B cell (primary cell): ENCODE measurements at regions of chr4 and their contacts with region 1.

Region 1: DNA sequence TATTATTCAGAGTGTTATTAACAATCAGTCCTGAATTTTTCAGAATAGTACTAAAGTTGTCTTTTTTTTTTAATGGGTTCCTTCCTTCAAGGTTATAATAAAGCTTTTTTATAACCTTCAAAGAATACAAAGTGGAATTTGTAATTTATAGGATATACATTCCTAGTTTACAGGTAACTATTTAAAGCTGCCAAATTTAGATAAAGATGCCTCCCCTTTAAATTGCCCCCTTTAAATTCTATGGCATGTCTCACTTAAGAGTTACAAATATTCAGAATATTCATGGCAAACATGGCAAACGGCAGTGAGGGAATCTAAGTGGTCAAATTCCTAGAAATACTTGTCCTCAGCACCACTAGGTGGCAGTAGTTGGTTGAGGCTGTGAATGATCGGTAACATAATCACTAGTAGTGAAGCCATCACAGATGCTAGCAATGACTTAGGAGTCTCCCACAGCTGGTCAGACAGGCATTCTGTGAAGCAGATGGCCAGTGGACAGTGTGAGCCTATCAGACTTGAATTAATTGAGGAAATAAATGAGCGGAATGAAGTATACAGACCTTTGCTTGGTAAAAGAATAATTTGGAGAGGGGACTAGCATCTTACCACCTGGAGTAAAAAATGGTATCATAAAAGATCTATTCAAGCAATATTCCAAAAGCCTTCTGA is 86.4 kb downstream of the CBR4 start:
- DNase-seq: peak; percentile 71
- ATAC-seq: peak; percentile 51
- H3K4me3 ChIP-seq: no peak overlapping the region
- H3K4me3 Mint-ChIP-seq: no peak overlapping the region
- H3K27ac ChIP-seq: no peak overlapping the region
- H3K27ac Mint-ChIP-seq: no peak overlapping the region
- H3K4me1 ChIP-seq: no peaks in the 10 kb centered on the region
- H3K4me1 Mint-ChIP-seq: no peaks in the 10 kb centered on the region
- H3K27me3 ChIP-seq: no peaks in the 10 kb centered on the region
- H3K27me3 Mint-ChIP-seq: no peaks in the 10 kb centered on the region
- CTCF ChIP-seq: peak; percentile 90

Region 2: GRCh38 chr4:168183717-168184608 is 739.7 kb before region 1 on chr4:
- CTCF ChIA-PET with region 1: interaction called, 4 read pairs
- POLR2A ChIA-PET with region 1: no interaction called
- intact Hi-C with region 1: loop called (anchors 5 kb)
- DNase-seq: peak; percentile 12
- ATAC-seq: no peak
- H3K4me3 ChIP-seq: no peak overlapping the region
- H3K4me3 Mint-ChIP-seq: no peak overlapping the region
- H3K27ac ChIP-seq: no peak overlapping the region
- H3K27ac Mint-ChIP-seq: no peak overlapping the region
- H3K4me1 ChIP-seq: peaks cover 0 to 3% of the 10 kb centered on the region in 2 donors
- H3K4me1 Mint-ChIP-seq: peaks cover 6% of the 10 kb centered on the region
- H3K27me3 ChIP-seq: no peaks in the 10 kb centered on the region
- H3K27me3 Mint-ChIP-seq: no peaks in the 10 kb centered on the region
- CTCF ChIP-seq: peak; percentile 52

Region 3: DNA sequence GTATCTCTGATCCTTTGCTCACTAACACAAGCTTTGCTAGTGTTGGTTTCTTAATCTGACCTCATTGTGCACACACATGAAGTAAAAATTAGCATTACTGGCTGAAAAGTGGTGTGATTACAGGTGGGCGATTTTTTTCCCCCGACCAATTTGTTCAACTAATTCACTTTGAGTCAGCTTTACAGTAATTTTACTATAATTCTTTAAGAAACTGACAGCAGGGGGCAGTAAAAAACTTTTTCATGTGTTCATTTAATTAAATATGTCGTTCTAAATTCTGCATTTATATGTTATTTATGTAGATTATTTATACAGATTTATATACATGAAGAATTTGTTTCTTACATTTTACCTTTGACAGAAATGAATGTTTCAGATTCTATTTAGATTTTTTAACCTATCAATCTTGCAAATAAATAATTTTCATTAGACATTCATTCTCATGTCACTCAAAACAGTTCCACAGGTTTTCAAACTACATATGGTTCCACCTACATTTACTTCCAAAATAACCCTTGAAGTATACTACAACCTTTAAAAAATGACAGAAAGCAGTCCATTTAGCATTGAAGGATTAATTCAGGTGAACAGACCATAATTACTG is 409.3 kb before region 1 on chr4:
- CTCF ChIA-PET with region 1: interaction called, 6 read pairs
- POLR2A ChIA-PET with region 1: no interaction called
- intact Hi-C with region 1: loop called (anchors 10 kb)
- DNase-seq: peak; percentile 34
- ATAC-seq: no peak
- H3K4me3 ChIP-seq: no peak overlapping the region
- H3K4me3 Mint-ChIP-seq: no peak overlapping the region
- H3K27ac ChIP-seq: no peak overlapping the region
- H3K27ac Mint-ChIP-seq: no peak overlapping the region
- H3K4me1 ChIP-seq: no peaks in the 10 kb centered on the region
- H3K4me1 Mint-ChIP-seq: peaks cover 2% of the 10 kb centered on the region
- H3K27me3 ChIP-seq: no peaks in the 10 kb centered on the region
- H3K27me3 Mint-ChIP-seq: peaks cover 3% of the 10 kb centered on the region
- CTCF ChIP-seq: peak; percentile 73

Region 4: DNA sequence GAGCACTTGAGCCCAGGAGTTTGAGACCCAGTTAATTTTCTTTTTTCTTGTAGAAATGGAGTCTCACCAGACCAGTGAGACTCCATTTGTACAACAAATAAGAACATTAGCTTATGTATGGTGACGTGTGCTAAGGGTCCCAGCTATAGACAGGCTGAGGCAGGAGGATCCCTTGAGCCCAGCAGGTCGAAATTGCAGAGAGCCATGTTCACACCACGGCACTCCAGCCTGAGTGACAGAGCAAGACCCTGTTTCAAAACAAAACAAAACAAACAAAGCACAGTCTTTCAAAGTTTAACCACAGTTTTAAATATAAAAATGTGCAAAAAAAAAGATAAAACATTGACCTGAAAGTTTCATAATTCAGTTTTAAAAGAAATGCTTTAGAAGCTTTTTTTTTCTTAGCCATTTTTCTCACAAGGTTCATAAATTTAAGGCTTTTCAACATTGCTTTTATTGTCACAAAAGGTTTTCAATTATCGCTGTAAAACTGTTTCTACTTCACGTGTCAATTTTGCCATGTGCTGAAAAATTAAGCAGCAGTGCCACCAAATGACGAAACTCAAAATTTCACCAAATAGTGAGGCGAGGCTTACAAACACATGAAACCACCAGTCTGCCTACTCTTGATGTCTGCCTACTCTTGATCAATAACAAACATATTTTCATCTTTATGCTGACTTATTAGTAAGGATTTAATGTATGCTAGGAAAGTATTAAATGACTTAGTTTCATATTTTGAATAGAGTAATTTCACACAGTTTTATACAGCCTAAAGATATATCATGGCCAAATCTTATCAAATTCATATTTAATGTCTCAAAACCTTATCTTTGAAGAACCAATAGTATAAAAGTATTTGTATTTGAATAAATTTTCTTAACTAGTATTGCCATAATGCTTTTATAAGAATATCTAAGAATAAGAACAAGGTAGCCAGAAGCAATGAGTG is 562.4 kb after region 1 on chr4:
- CTCF ChIA-PET with region 1: interaction called, 102 read pairs
- POLR2A ChIA-PET with region 1: no interaction called
- intact Hi-C with region 1: loop called (anchors 1 kb)
- DNase-seq: peak; percentile 57
- ATAC-seq: peak; percentile 43
- H3K4me3 ChIP-seq: no peak overlapping the region
- H3K4me3 Mint-ChIP-seq: no peak overlapping the region
- H3K27ac ChIP-seq: no peak overlapping the region
- H3K27ac Mint-ChIP-seq: no peak overlapping the region
- H3K4me1 ChIP-seq: no peaks in the 10 kb centered on the region
- H3K4me1 Mint-ChIP-seq: no peaks in the 10 kb centered on the region
- H3K27me3 ChIP-seq: no peaks in the 10 kb centered on the region
- H3K27me3 Mint-ChIP-seq: no peaks in the 10 kb centered on the region
- CTCF ChIP-seq: peak; percentile 74

Region 5: GRCh38 chr4:169492438-169493163 is 568.9 kb after region 1 on chr4:
- CTCF ChIA-PET with region 1: interaction called, 102 read pairs
- POLR2A ChIA-PET with region 1: no interaction called
- intact Hi-C with region 1: no loop called
- DNase-seq: peak; percentile 37
- ATAC-seq: peak; percentile 33
- H3K4me3 ChIP-seq: no peak overlapping the region
- H3K4me3 Mint-ChIP-seq: no peak overlapping the region
- H3K27ac ChIP-seq: no peak overlapping the region
- H3K27ac Mint-ChIP-seq: no peak overlapping the region
- H3K4me1 ChIP-seq: no peaks in the 10 kb centered on the region
- H3K4me1 Mint-ChIP-seq: no peaks in the 10 kb centered on the region
- H3K27me3 ChIP-seq: no peaks in the 10 kb centered on the region
- H3K27me3 Mint-ChIP-seq: no peaks in the 10 kb centered on the region
- CTCF ChIP-seq: peak; percentile 65

Region 6: DNA sequence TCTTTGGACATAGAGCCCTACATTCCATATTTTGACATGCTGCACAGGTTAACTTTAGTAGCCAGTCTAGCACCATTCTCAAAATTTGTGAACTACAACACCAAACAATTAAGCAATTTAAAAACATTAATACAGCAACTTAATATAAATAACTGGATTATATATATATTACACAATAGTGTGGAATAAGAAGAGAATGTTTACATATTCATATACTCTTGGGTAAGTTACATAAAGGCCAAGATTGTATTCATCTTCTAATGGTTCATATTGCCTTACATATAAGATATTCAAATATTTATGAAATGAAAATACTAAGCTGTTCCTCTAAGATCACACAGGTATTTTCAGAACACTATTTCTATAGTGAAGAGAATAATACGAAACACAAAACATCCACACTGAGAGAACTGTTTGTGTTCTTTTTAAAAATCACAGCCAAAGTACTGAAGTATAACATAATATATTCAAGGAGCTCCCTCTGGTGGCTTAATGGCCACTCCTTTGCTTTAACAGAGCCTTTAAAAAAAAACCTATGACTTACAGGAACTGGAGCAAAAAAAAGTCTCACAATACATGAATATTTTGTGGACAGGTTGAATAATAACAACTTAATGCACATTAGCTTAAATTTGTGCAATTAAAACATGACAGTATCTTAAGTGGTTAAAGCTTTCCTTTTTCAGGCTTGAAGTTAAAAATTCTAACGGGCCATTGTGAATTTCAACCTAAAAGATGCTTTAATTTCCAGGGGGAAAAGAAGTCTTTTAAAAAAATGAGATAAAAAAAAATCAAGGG is 642.6 kb after region 1 on chr4:
- CTCF ChIA-PET with region 1: interaction called, 67 read pairs
- POLR2A ChIA-PET with region 1: no interaction called
- intact Hi-C with region 1: loop called (anchors 1 kb)
- DNase-seq: peak; percentile 64
- ATAC-seq: peak; percentile 41
- H3K4me3 ChIP-seq: no peak overlapping the region
- H3K4me3 Mint-ChIP-seq: no peak overlapping the region
- H3K27ac ChIP-seq: no peak overlapping the region
- H3K27ac Mint-ChIP-seq: no peak overlapping the region
- H3K4me1 ChIP-seq: no peaks in the 10 kb centered on the region
- H3K4me1 Mint-ChIP-seq: peaks cover 4% of the 10 kb centered on the region
- H3K27me3 ChIP-seq: no peaks in the 10 kb centered on the region
- H3K27me3 Mint-ChIP-seq: no peaks in the 10 kb centered on the region
- CTCF ChIP-seq: peak; percentile 84

Region 7: DNA sequence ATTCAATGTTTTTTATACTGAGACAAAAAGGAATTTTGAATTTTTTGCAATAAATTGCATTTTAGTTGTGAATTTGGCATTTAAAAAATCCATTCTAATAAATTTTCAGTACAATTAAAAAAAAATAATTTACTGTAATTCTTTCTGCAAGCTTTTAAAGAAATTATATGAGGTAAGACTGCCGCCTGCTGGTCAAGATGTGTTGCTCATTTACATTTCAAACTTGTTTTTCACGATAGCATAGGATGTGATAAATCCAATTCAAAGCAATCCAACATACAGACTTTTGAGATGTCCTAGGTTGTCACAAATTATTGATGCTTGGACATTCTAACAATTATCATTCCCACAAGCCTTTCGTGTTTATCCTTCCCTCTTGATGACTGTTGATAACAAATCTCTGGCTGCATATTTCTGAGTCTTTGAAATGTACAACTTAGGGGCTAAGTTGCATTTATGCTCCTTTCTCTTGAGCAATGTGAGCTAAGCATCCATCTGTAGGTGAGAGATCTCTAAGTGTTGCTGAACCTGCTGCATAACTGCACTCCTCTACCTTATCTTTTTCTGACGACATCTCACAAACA is 1124.2 kb after region 1 on chr4:
- CTCF ChIA-PET with region 1: interaction called, 3 read pairs
- POLR2A ChIA-PET with region 1: no interaction called
- intact Hi-C with region 1: loop called (anchors 5 kb)
- DNase-seq: peak; percentile 69
- ATAC-seq: no peak
- H3K4me3 ChIP-seq: no peak overlapping the region
- H3K4me3 Mint-ChIP-seq: no peak overlapping the region
- H3K27ac ChIP-seq: no peak overlapping the region
- H3K27ac Mint-ChIP-seq: no peak overlapping the region
- H3K4me1 ChIP-seq: no peaks in the 10 kb centered on the region
- H3K4me1 Mint-ChIP-seq: no peaks in the 10 kb centered on the region
- H3K27me3 ChIP-seq: peaks cover 0 to 3% (median 1%) of the 10 kb centered on the region in 4 experiments
- H3K27me3 Mint-ChIP-seq: peaks cover 3% of the 10 kb centered on the region
- CTCF ChIP-seq: peak; percentile 88